Activated T-helper 1 cell treated with anti-CD3 and anti-CD28 coated beads, Interleukin-12 subunit alpha, Interleukin-12 subunit beta, Interleukin-2, Interleukin-4 antibody, amounts not matched to agents 30 ng/mL and 10 ng/mL and 1 ng/mL, durations not matched to agents 14 hours and 24 hours and 36 hours (primary cell): ENCODE measurements at regions of chr13 and their contacts with region 1.

Region 1: DNA sequence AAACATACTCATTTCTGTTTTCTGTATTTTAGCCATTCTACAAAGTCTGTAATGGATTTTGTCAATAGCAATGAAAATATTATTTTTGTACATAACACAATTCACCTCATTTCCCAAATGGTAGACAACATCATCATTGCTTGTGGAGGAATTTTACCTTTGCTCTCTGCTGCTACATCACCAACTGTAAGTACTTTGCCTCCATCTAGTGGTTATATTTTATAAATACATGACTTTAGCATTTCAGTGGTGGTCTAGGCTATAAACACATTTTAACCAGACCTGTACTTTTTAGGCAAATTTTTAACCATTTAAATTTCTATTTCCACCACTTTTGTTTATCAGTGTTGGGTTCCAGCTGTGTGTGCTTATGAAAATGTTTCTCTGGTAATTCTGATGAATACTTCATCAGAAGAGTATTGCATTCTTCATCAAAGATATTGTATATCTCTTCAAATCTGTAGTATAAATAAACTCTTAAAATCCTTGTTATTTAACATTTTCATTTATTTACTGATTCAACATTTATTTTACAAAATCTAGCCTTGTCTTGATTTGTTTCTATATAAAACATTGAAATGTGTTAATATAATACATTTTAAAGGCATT is 222.4 kb downstream of the NBEA start:
- DNase-seq: no peak
- H3K4me3 Mint-ChIP-seq: no peak overlapping the region
- H3K27ac Mint-ChIP-seq: no peak overlapping the region
- H3K4me1 Mint-ChIP-seq: peaks cover 10% of the 10 kb centered on the region
- H3K27me3 Mint-ChIP-seq: no peaks in the 10 kb centered on the region

Region 2: DNA sequence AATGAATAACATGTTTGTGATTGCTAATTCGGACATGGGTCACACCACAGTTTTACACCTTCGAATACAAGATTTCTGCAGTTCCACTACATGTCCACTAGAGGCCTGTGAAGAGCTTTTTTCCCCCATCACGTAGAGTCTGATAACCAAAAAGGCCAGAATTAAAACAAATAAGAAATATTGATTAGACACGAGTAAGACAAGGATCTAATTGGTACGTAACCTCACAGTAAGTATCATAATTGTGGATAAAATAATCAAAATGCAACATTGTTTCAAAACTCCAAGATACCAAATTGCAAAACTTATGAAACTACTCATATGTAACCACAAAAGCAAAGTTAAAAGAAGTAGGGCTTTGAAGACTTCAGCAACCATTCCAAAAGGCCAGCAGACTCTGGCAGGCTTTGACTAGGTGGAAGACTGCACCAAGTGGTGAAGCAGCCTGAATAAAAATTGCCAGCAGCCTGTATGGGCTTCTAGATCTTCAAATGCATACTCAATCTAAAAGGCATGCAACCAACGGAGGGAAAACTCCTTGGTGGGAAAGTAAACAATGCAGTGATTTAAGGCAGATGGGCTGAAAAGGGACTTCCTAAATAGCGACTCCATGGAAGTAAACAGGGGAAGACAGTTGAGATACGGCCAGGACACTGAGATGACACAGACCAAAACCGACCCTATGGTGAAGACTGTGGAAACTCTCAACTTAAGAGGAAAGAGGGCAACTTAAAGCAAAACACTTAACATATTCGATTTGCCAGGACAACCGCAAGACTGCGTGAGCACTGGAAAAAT is 1935.6 kb before region 1 on chr13:
- intact Hi-C with region 1: loop called (anchors 5 kb)
- DNase-seq: no peak
- H3K4me3 Mint-ChIP-seq: no peak overlapping the region
- H3K27ac Mint-ChIP-seq: no peak overlapping the region
- H3K4me1 Mint-ChIP-seq: peaks cover 11% of the 10 kb centered on the region
- H3K27me3 Mint-ChIP-seq: no peaks in the 10 kb centered on the region

Region 3: GRCh38 chr13:33799950-33800592 is 1364.4 kb before region 1 on chr13:
- intact Hi-C with region 1: loop called (anchors 2 kb)
- DNase-seq: no peak
- H3K4me3 Mint-ChIP-seq: no peak overlapping the region
- H3K27ac Mint-ChIP-seq: no peak overlapping the region
- H3K4me1 Mint-ChIP-seq: no peaks in the 10 kb centered on the region
- H3K27me3 Mint-ChIP-seq: peaks cover 14% of the 10 kb centered on the region

Region 4: DNA sequence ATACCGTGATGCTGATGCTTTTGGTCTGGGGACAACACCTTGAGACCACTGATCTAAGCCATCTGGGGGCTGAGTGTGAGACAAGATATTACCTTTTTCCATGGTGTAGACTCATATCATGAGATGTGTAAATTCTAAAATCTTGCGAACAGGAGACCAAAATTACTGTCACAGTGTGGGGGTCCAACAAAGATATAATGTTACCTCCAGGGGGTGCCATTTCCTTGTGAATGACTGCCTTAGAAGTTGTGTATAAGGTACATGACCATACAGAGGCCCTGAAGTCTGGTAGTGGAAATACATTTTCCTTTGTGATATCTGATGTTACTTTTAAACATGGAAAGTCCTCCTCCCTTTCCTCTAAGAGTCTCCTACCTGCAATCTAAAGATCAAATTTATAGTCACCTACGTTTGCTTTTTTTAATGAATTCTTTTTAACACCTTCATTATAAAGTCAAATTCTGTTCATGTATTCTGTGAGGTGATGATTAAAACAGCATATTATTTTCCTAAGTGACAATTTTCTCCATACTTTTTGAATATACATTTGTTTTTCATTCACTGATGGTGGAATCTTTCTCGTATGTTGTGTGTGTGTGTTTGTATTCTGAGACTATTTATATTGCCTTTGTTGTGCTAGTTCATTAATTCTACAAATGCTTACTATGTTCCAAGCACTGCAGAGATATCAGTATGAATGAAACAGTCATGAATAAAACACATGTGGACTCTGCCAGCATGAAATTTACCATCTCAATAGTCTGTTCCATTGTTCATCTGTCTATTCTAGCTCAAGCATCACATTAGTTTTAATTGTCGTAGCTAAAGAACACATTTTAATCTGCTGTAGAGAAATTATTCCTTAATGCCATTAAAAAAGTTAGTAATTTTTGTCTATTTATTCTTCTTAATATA is 1232.8 kb before region 1 on chr13:
- intact Hi-C with region 1: loop called (anchors 2 kb)
- DNase-seq: no peak
- H3K4me3 Mint-ChIP-seq: no peak overlapping the region
- H3K27ac Mint-ChIP-seq: no peak overlapping the region
- H3K4me1 Mint-ChIP-seq: no peaks in the 10 kb centered on the region
- H3K27me3 Mint-ChIP-seq: peaks cover 2% of the 10 kb centered on the region

Region 5: DNA sequence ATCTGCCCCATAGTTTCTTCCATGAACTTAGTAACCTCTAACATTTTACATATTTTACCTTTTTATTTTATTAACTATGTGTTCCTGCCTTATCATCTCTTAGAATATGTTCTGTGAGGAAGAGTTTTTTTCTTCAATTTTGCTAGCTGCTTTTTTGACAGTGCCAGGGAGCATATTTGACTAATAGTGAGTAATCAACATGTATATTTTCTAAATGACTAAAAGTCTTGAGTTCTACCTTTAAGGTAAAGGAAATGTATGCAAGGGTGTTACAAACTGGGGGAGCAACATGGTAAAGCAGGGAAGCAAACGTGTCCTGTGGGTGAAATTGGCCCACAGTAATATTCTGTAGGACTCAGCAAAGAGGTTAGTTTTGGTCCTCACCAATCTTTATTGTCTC is 56.9 kb before region 1 on chr13:
- intact Hi-C with region 1: no loop called
- DNase-seq: no peak
- H3K4me3 Mint-ChIP-seq: no peak overlapping the region
- H3K27ac Mint-ChIP-seq: no peak overlapping the region
- H3K4me1 Mint-ChIP-seq: no peaks in the 10 kb centered on the region
- H3K27me3 Mint-ChIP-seq: no peaks in the 10 kb centered on the region